GM12878 (cell line): ENCODE measurements at regions of chr7 and their contacts with region 1.

Region 1: GRCh38 chr7:92833024-92833765 is 3.2 kb downstream of the CDK6 start:
- DNase-seq: no peak
- ATAC-seq: peak; percentile 72
- H3K4me3 ChIP-seq: peak overlapping the region; percentile 85
- H3K27ac ChIP-seq: peak overlapping the region; percentile 91
- H3K4me1 ChIP-seq: peaks cover 5% of the 10 kb centered on the region
- H3K27me3 ChIP-seq: no peaks in the 10 kb centered on the region
- CTCF ChIP-seq: peak; percentile 87 to 98 (median 94)
- EP300 ChIP-seq: peak in 1 of 2 experiments; percentile 21; a peak in 1 of 4 replicates
- POLR2A ChIP-seq: peak; percentile 77
- RAD21 ChIP-seq: peak; percentile 88

Region 2: GRCh38 chr7:92621026-92621540 is 212.1 kb before region 1 on chr7:
- CTCF ChIA-PET with region 1: interaction called, 58 read pairs
- POLR2A ChIA-PET with region 1: interaction called, 6 read pairs
- RAD21 ChIA-PET with region 1: interaction called, 78 read pairs
- SMC1A ChIA-PET with region 1: interaction called, 44 read pairs
- in situ Hi-C with region 1: loop called (anchors 5 kb)
- intact Hi-C with region 1: loop called (anchors 1 kb)
- DNase-seq: peak; percentile 79
- ATAC-seq: peak; percentile 79
- H3K4me3 ChIP-seq: peak overlapping the region; percentile 12; the same call in 1 of the 2 replicates
- H3K27ac ChIP-seq: peak overlapping the region; percentile 75
- H3K4me1 ChIP-seq: peaks cover 16% of the 10 kb centered on the region
- H3K27me3 ChIP-seq: no peaks in the 10 kb centered on the region
- CTCF ChIP-seq: peak; percentile 64 to 94 (median 76); a peak in 5 of 6 replicates
- EP300 ChIP-seq: no peak
- POLR2A ChIP-seq: no peak
- RAD21 ChIP-seq: peak; percentile 95

Region 3: DNA sequence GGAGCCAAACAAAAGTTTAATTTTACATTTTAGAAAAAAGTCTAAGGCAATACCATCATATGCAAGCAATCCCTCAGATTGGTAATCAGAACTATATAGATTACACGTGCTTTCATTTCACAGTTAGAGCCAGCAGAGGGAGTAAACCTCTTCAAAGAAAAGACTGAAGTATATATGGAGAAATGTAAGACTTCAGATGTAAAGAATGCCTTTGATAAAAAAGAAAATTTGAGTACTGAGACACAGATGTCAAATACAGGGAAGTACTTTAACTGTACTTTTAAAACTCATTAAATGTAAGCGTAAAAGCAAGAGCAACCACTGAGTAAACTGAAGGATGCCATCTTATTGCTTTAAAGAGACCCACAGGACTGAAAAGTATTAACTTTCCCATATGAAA is 141.6 kb before region 1 on chr7:
- CTCF ChIA-PET with region 1: interaction called, 16 read pairs
- POLR2A ChIA-PET with region 1: interaction called, 3 read pairs
- RAD21 ChIA-PET with region 1: interaction called, 23 read pairs
- SMC1A ChIA-PET with region 1: interaction called, 20 read pairs
- in situ Hi-C with region 1: loop called (anchors 5 kb)
- intact Hi-C with region 1: loop called (anchors 1 kb)
- DNase-seq: peak; percentile 37
- ATAC-seq: peak; percentile 96
- H3K4me3 ChIP-seq: no peak overlapping the region
- H3K27ac ChIP-seq: no peak overlapping the region
- H3K4me1 ChIP-seq: no peaks in the 10 kb centered on the region
- H3K27me3 ChIP-seq: no peaks in the 10 kb centered on the region
- CTCF ChIP-seq: peak; percentile 45 to 60 (median 58); a peak in 5 of 6 replicates
- EP300 ChIP-seq: no peak
- POLR2A ChIP-seq: no peak
- RAD21 ChIP-seq: peak; percentile 86

Region 4: GRCh38 chr7:92720604-92721350 is 112.4 kb before region 1 on chr7:
- CTCF ChIA-PET with region 1: interaction called, 21 read pairs
- POLR2A ChIA-PET with region 1: interaction called, 8 read pairs
- RAD21 ChIA-PET with region 1: interaction called, 21 read pairs
- SMC1A ChIA-PET with region 1: interaction called, 15 read pairs
- in situ Hi-C with region 1: no loop called
- intact Hi-C with region 1: no loop called
- DNase-seq: no peak
- ATAC-seq: peak; percentile 79
- H3K4me3 ChIP-seq: no peak overlapping the region
- H3K27ac ChIP-seq: peak overlapping the region; percentile 67
- H3K4me1 ChIP-seq: peaks cover 31% of the 10 kb centered on the region
- H3K27me3 ChIP-seq: no peaks in the 10 kb centered on the region
- CTCF ChIP-seq: peak in 1 of 3 experiments; percentile 21; a peak in 2 of 6 replicates
- EP300 ChIP-seq: 0 out of 4 replicates have a peak, but pooled peaks of 1 of the 2 experiments have one; percentile 17
- POLR2A ChIP-seq: no peak
- RAD21 ChIP-seq: peak; percentile 65

Region 5: GRCh38 chr7:92797693-92798092 is 35.5 kb before region 1 on chr7:
- CTCF ChIA-PET with region 1: interaction called, 13 read pairs
- POLR2A ChIA-PET with region 1: interaction called, 3 read pairs
- RAD21 ChIA-PET with region 1: interaction called, 4 read pairs
- SMC1A ChIA-PET with region 1: interaction called, 9 read pairs
- in situ Hi-C with region 1: no loop called
- intact Hi-C with region 1: no loop called
- DNase-seq: no peak
- ATAC-seq: peak; percentile 55
- H3K4me3 ChIP-seq: 0 out of 2 replicates have a peak overlapping the region, but pooled peaks have one; percentile 3
- H3K27ac ChIP-seq: peak overlapping the region; percentile 45; the same call in 1 of the 2 replicates
- H3K4me1 ChIP-seq: peaks cover 22% of the 10 kb centered on the region
- H3K27me3 ChIP-seq: no peaks in the 10 kb centered on the region
- CTCF ChIP-seq: no peak
- EP300 ChIP-seq: no peak
- POLR2A ChIP-seq: no peak
- RAD21 ChIP-seq: no peak

Region 6: DNA sequence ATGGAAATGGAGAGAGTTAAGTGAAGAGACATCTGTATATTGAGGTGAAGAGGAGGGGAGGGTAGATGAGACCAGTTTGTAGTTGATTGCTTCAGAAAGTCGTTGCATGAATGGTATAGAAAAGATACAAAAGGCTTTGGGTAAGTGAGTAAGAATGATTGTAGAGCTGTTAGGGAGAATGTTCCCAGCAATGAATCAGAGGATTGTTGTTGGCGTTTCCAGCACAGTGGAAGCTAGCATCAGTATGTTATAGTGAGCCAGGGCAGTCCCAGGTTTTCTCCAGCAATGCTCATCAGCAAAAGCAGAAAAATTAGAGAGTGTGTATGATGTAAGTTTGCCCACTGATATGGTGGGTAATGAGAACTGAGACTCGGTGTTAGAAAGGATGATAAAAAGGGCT is 18.5 kb after region 1 on chr7:
- CTCF ChIA-PET with region 1: interaction called, 3 read pairs
- POLR2A ChIA-PET with region 1: interaction called, 4 read pairs
- RAD21 ChIA-PET with region 1: interaction called, 3 read pairs
- SMC1A ChIA-PET with region 1: interaction called, 9 read pairs
- in situ Hi-C with region 1: no loop called
- intact Hi-C with region 1: loop called (anchors 2 kb)
- DNase-seq: no peak
- ATAC-seq: no peak
- H3K4me3 ChIP-seq: no peak overlapping the region
- H3K27ac ChIP-seq: no peak overlapping the region
- H3K4me1 ChIP-seq: no peaks in the 10 kb centered on the region
- H3K27me3 ChIP-seq: no peaks in the 10 kb centered on the region
- CTCF ChIP-seq: no peak
- EP300 ChIP-seq: no peak
- POLR2A ChIP-seq: no peak
- RAD21 ChIP-seq: no peak

Region 7: DNA sequence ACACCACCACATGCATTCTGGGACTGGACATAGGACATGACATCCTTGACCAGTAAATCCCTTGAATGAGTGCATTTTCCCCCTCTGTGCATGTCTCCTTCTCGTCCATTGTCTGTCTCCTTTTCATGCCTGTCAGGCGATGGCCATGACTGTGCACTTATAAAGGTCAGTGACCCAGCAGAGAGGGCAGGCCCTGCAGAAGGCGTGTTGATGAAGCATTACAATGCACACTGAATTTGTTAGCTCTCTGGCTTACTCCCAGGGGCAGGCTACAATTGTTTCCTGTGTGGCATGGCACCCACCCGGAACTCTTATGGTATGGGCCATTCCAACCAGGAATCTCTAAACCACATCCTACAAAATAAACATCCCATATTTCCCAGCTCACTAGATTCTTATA is 213.4 kb after region 1 on chr7:
- CTCF ChIA-PET with region 1: interaction called, 5 read pairs
- POLR2A ChIA-PET with region 1: no interaction called
- RAD21 ChIA-PET with region 1: interaction called, 5 read pairs
- SMC1A ChIA-PET with region 1: interaction called, 12 read pairs
- in situ Hi-C with region 1: loop called (anchors 10 kb)
- intact Hi-C with region 1: no loop called
- DNase-seq: no peak
- ATAC-seq: peak; percentile 29
- H3K4me3 ChIP-seq: no peak overlapping the region
- H3K27ac ChIP-seq: no peak overlapping the region
- H3K4me1 ChIP-seq: peaks cover 7% of the 10 kb centered on the region
- H3K27me3 ChIP-seq: no peaks in the 10 kb centered on the region
- CTCF ChIP-seq: no peak
- EP300 ChIP-seq: no peak
- POLR2A ChIP-seq: no peak
- RAD21 ChIP-seq: no peak